ENCODE measurements at regions of chr4 and their contacts with region 1.

Region 1: DNA sequence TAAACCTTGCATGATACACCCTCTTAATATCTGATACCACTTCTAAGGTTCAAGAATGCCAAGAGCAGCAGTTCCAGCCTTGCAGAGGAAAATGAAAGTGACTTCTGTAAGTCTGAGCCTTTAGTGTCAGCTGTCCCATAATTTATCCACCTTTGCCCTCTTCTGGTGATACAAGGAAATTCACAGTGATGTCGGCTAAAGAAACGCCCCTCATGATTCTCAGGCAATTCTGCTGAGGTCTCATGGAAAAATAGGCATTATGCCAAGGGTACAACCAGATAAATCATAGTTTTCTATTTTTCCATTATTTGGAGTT is 172.2 kb upstream of the CXCL13 start:
- DNase-seq: peak; percentile 20
- H3K4me3 Mint-ChIP-seq: no peak overlapping the region
- H3K27ac Mint-ChIP-seq: no peak overlapping the region
- H3K4me1 Mint-ChIP-seq: no peaks in the 10 kb centered on the region
- H3K27me3 Mint-ChIP-seq: peaks cover 15% of the 10 kb centered on the region
- CTCF ChIP-seq: peak; percentile 17

Region 2: DNA sequence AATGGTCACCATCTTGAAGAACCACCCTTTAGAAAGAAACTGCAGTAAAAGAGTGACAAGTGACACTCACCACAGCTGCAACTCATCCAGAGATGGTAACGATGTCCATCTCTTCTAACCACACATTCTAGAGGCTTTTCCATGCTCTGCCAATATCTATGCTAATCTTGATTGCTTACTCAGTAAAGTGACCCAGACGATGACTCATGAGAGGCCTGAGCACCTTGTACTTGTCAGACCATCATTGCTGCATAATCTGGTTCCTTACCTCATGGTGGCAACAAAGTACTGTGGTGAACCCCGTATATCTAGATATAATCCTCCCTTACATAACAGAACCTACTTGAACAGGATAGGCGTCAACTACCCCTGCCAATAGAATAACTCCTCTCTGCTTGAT is 200.7 kb before region 1 on chr4:
- CTCF ChIA-PET with region 1: no interaction called
- intact Hi-C with region 1: loop called (anchors 2 kb)
- DNase-seq: peak; percentile 7
- H3K4me3 Mint-ChIP-seq: no peak overlapping the region
- H3K27ac Mint-ChIP-seq: no peak overlapping the region
- H3K4me1 Mint-ChIP-seq: no peaks in the 10 kb centered on the region
- H3K27me3 Mint-ChIP-seq: peaks cover 39% of the 10 kb centered on the region
- CTCF ChIP-seq: no peak

Region 3: DNA sequence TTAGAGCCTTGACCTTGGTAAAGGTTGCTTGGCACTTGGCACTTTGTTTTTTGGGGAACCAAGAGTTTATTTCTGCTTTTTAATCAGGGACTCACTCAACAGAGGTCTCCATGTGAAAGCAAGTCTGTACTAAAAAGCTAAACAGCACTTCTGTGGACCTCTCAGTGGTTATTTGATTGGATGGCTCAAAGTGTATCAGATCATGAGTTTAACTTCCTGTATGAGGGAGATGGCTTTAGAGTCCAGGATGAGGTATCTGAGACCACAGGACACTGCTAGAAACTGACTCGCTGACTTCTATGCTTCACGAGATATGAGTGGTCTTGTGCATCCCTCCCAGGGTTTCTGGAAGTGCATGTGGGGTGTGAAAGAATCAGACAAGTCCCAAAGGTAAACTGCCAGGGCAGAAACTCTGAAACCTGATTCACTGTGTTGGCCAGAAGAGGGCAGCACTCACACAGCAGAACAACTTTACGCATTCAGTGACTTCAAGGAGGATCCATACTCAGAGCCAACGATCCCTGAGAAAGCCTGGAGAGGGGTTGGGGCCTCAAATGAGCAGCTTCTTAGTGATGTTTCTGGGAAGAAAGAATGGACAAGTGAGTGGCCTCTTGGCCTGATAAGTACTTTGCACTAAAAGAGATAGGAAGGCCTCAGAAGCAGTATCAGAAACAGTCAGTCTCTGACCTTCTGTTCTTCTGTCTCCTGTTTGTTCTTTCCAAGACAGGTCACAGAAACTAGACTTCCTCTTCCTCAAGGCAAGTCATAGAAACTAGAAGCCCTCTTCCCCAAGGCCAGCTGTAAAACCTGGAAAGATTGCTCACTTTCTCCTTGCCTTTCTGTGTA is 48.0 kb before region 1 on chr4:
- CTCF ChIA-PET with region 1: interaction called, 3 read pairs
- intact Hi-C with region 1: loop called (anchors 2 kb)
- DNase-seq: peak; percentile 51
- H3K4me3 Mint-ChIP-seq: no peak overlapping the region
- H3K27ac Mint-ChIP-seq: no peak overlapping the region
- H3K4me1 Mint-ChIP-seq: no peaks in the 10 kb centered on the region
- H3K27me3 Mint-ChIP-seq: peaks cover 41% of the 10 kb centered on the region
- CTCF ChIP-seq: peak; percentile 60

Region 4: DNA sequence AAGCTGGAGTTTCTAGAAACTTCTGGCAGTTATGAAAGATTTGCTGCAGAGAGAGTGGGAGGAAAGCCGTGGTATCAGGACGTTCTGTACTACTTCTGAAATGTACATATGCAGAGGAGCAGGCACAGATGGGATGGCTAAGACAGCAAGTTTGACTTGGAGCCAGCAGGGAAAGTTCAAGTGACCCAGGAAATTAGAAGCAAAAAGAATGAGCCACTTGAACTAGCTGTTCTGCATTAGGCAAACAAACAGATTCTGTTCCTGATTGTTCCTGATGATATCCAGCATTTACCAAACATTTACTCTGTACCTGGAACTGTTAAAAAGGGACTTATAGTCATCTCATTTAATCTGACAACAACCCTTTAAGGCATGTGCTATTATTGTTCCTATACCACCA is 130.9 kb after region 1 on chr4:
- CTCF ChIA-PET with region 1: no interaction called
- intact Hi-C with region 1: no loop called
- DNase-seq: no peak
- H3K4me3 Mint-ChIP-seq: no peak overlapping the region
- H3K27ac Mint-ChIP-seq: no peak overlapping the region
- H3K4me1 Mint-ChIP-seq: peaks cover 10% of the 10 kb centered on the region
- H3K27me3 Mint-ChIP-seq: peaks cover 17% of the 10 kb centered on the region
- CTCF ChIP-seq: no peak